Activated CD4-positive, alpha-beta memory T cell treated with anti-CD3 and anti-CD28 coated beads, Interleukin-2, amount 10 ng/mL, durations not matched to agents 7 days and 5 days (primary cell): ENCODE measurements at regions of chr20 and their contacts with region 1.

Region 1: GRCh38 chr20:53939572-53940359 is 130.6 kb downstream of the BCAS1 start:
- DNase-seq: peak; percentile 81
- H3K4me3 Mint-ChIP-seq: no peak overlapping the region
- H3K27ac Mint-ChIP-seq: no peak overlapping the region
- H3K4me1 Mint-ChIP-seq: peaks cover 39% of the 10 kb centered on the region
- H3K27me3 Mint-ChIP-seq: no peaks in the 10 kb centered on the region

Region 2: GRCh38 chr20:53413186-53413631 is 526.6 kb before region 1 on chr20:
- CTCF ChIA-PET with region 1: interaction called, 11 read pairs
- POLR2A ChIA-PET with region 1: no interaction called
- DNase-seq: peak; percentile 63
- H3K4me3 Mint-ChIP-seq: no peak overlapping the region
- H3K27ac Mint-ChIP-seq: no peak overlapping the region
- H3K4me1 Mint-ChIP-seq: peaks cover 4% of the 10 kb centered on the region
- H3K27me3 Mint-ChIP-seq: no peaks in the 10 kb centered on the region

Region 3: GRCh38 chr20:53547664-53548239 is 392.0 kb before region 1 on chr20:
- CTCF ChIA-PET with region 1: interaction called, 13 read pairs
- POLR2A ChIA-PET with region 1: no interaction called
- DNase-seq: peak; percentile 28
- H3K4me3 Mint-ChIP-seq: no peak overlapping the region
- H3K27ac Mint-ChIP-seq: no peak overlapping the region
- H3K4me1 Mint-ChIP-seq: no peaks in the 10 kb centered on the region
- H3K27me3 Mint-ChIP-seq: no peaks in the 10 kb centered on the region

Region 4: DNA sequence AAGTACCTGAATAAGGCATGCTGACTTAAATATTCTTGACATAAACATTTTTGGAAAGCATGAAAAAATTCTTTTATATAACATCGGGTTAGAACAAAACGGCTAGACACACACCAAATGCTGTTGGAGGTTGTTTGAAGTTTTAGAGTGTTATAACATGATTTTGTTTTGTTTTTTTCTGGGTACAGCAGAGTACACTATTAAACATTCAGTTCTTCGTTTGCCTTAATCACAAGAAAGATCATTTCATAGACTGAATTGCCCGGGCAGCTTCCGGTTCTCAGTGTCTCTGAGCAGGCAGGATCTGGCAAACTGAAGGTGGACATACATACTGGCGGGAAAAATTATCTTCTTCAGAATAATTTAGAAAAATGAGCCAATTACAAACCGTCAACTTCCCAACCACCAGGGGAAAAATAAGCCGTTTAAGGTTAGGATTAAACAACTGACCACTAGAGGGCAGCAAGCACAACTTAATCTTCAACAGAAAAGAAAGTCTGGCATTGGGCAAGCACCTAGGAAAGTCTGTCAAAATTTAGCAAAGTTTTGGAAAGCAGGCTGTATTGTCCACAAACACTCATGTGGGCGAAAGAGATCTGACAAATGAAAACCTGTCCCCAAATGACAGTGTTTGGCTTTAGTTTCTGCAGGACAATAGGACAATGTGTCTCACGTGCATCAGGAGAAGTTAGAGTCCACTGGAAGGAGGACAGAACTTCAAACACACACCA is 361.1 kb before region 1 on chr20:
- CTCF ChIA-PET with region 1: interaction called, 42 read pairs
- POLR2A ChIA-PET with region 1: interaction called, 13 read pairs
- DNase-seq: peak; percentile 55
- H3K4me3 Mint-ChIP-seq: peak overlapping the region; percentile 78
- H3K27ac Mint-ChIP-seq: peak overlapping the region; percentile 80
- H3K4me1 Mint-ChIP-seq: peaks cover 92% of the 10 kb centered on the region
- H3K27me3 Mint-ChIP-seq: no peaks in the 10 kb centered on the region

Region 5: GRCh38 chr20:53926428-53927028 is 13.2 kb before region 1 on chr20:
- CTCF ChIA-PET with region 1: interaction called, 18 read pairs
- POLR2A ChIA-PET with region 1: interaction called, 10 read pairs
- DNase-seq: no peak
- H3K4me3 Mint-ChIP-seq: no peak overlapping the region
- H3K27ac Mint-ChIP-seq: no peak overlapping the region
- H3K4me1 Mint-ChIP-seq: peaks cover 34% of the 10 kb centered on the region
- H3K27me3 Mint-ChIP-seq: peaks cover 2% of the 10 kb centered on the region

Region 6: DNA sequence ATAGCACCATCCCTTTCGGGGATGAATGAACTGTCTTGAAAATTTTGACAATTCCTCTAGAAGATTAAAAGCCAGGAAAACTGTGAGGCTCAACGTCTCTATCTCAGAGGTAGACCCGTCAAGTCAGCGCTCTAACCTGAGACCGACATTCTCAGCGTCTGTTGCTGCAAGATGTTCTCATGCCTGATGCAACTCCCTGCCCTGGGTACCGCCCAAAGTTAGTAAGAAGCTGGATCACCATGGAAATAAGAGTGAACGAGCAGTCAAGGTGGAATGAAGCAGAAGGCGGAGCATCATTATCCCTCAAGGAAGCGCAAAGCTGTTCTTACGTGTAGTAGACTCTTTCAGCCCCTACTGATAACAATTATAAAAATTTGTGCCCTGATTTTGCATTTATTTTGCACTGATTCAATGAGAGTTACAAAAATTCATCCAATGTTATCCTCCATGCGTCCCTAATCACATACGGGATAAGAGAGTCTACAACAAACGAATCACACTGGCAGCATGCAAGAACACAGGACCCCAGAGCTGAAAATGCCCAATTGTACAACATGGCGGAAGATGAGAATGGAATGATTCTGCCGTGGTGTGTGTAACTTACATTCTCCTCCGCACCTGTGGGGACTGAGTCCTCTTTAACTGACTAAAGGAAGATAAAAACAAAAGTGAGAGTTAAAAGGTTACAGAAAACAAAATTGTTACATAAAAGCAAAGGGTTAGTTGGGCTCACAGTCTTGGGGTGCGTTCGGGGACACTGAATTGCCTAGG is 35.2 kb after region 1 on chr20:
- CTCF ChIA-PET with region 1: no interaction called
- POLR2A ChIA-PET with region 1: no interaction called
- DNase-seq: no peak
- H3K4me3 Mint-ChIP-seq: no peak overlapping the region
- H3K27ac Mint-ChIP-seq: no peak overlapping the region
- H3K4me1 Mint-ChIP-seq: no peaks in the 10 kb centered on the region
- H3K27me3 Mint-ChIP-seq: no peaks in the 10 kb centered on the region